ENCODE measurements at regions of chr22 and their contacts with region 1.

Region 1: GRCh38 chr22:35023692-35024363 is 42.1 kb upstream of the ISX start:
- DNase-seq: peak; percentile 13
- ATAC-seq: peak; percentile 85
- H3K4me3 ChIP-seq: no peak overlapping the region
- H3K27ac ChIP-seq: no peak overlapping the region
- H3K4me1 ChIP-seq: no peaks in the 10 kb centered on the region
- H3K27me3 ChIP-seq: no peaks in the 10 kb centered on the region
- CTCF ChIP-seq: peak; percentile 90

Region 2: GRCh38 chr22:33920927-33921524 is 1102.8 kb before region 1 on chr22:
- CTCF ChIA-PET with region 1: interaction called, 3 read pairs
- POLR2A ChIA-PET with region 1: no interaction called
- in situ Hi-C with region 1: no loop called
- intact Hi-C with region 1: loop called (anchors 5 kb)
- DNase-seq: no peak
- ATAC-seq: peak; percentile 91
- H3K4me3 ChIP-seq: peak overlapping the region; percentile 39 to 60
- H3K27ac ChIP-seq: no peak overlapping the region
- H3K4me1 ChIP-seq: peaks cover 7% of the 10 kb centered on the region
- H3K27me3 ChIP-seq: peaks cover 14% of the 10 kb centered on the region
- CTCF ChIP-seq: no peak

Region 3: DNA sequence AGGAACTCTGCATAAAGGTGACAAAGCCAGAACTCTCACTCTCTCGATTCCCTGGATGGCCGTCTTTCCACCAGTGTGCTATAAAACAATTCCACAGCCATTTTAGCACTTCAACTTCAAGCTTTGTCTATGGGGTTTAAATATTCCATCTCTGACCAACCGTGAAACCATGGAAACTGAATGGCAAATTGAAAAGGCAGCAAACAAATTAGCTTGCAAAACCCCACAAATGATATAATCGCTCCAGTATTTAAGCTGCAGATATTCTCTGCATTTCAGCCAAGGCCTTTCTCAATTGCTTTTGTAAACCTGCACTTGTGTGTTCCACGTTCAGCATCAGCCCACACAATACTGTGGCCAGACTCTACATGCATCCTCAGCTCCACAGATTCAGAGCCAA is 89.6 kb before region 1 on chr22:
- CTCF ChIA-PET with region 1: no interaction called
- POLR2A ChIA-PET with region 1: no interaction called
- in situ Hi-C with region 1: no loop called
- intact Hi-C with region 1: no loop called
- DNase-seq: no peak
- ATAC-seq: no peak
- H3K4me3 ChIP-seq: no peak overlapping the region
- H3K27ac ChIP-seq: no peak overlapping the region
- H3K4me1 ChIP-seq: no peaks in the 10 kb centered on the region
- H3K27me3 ChIP-seq: no peaks in the 10 kb centered on the region
- CTCF ChIP-seq: no peak

Region 4: DNA sequence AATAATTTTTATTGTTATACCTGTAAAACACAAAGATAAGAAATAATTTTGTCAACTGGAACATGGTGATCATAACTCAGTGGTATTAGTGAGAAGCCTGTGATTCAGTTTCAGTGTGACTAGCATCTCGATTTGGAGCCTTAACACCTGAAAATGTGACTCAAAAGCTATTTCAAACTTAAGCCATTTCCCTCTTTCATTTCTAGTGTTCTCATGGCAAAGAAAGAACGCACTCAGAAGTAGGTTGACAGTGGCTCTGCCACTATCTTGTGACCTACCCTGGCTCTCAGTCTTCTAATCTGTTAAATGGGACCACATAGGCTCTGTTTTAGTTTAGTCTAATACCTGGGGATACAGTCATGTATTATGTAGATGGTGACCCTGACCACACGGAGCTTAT is 104.8 kb after region 1 on chr22:
- CTCF ChIA-PET with region 1: no interaction called
- POLR2A ChIA-PET with region 1: no interaction called
- in situ Hi-C with region 1: no loop called
- intact Hi-C with region 1: no loop called
- DNase-seq: no peak
- ATAC-seq: no peak
- H3K4me3 ChIP-seq: no peak overlapping the region
- H3K27ac ChIP-seq: no peak overlapping the region
- H3K4me1 ChIP-seq: no peaks in the 10 kb centered on the region
- H3K27me3 ChIP-seq: peaks cover 2% of the 10 kb centered on the region; the same call in 1 of the 2 replicates
- CTCF ChIP-seq: no peak

Measured in Panc1 (cell line).